ENCODE measurements at regions of chr5 and their contacts with region 1.

Region 1: GRCh38 chr5:164504141-164504772 is 998.8 kb downstream of the MAT2B start:
- DNase-seq: peak; percentile 75
- ATAC-seq: peak; percentile 51
- H3K4me3 ChIP-seq: no peak overlapping the region
- H3K4me3 Mint-ChIP-seq: no peak overlapping the region
- H3K27ac ChIP-seq: no peak overlapping the region
- H3K27ac Mint-ChIP-seq: no peak overlapping the region
- H3K4me1 ChIP-seq: no peaks in the 10 kb centered on the region
- H3K4me1 Mint-ChIP-seq: peaks cover 7% of the 10 kb centered on the region
- H3K27me3 ChIP-seq: no peaks in the 10 kb centered on the region
- H3K27me3 Mint-ChIP-seq: peaks cover 8% of the 10 kb centered on the region
- CTCF ChIP-seq: peak; percentile 85

Region 2: GRCh38 chr5:163473635-163474243 is 1030.5 kb before region 1 on chr5:
- CTCF ChIA-PET with region 1: interaction called, 3 read pairs
- POLR2A ChIA-PET with region 1: no interaction called
- intact Hi-C with region 1: loop called (anchors 10 kb)
- DNase-seq: peak; percentile 47
- ATAC-seq: peak; percentile 78
- H3K4me3 ChIP-seq: no peak overlapping the region
- H3K4me3 Mint-ChIP-seq: no peak overlapping the region
- H3K27ac ChIP-seq: no peak overlapping the region
- H3K27ac Mint-ChIP-seq: no peak overlapping the region
- H3K4me1 ChIP-seq: no peaks in the 10 kb centered on the region
- H3K4me1 Mint-ChIP-seq: no peaks in the 10 kb centered on the region
- H3K27me3 ChIP-seq: no peaks in the 10 kb centered on the region
- H3K27me3 Mint-ChIP-seq: no peaks in the 10 kb centered on the region
- CTCF ChIP-seq: peak; percentile 69

Region 3: GRCh38 chr5:163564321-163564938 is 939.8 kb before region 1 on chr5:
- CTCF ChIA-PET with region 1: interaction called, 147 read pairs
- POLR2A ChIA-PET with region 1: no interaction called
- intact Hi-C with region 1: loop called (anchors 1 kb)
- DNase-seq: peak; percentile 72
- ATAC-seq: peak; percentile 71
- H3K4me3 ChIP-seq: no peak overlapping the region
- H3K4me3 Mint-ChIP-seq: no peak overlapping the region
- H3K27ac ChIP-seq: no peak overlapping the region
- H3K27ac Mint-ChIP-seq: no peak overlapping the region
- H3K4me1 ChIP-seq: peaks cover 17 to 21% of the 10 kb centered on the region in 2 donors
- H3K4me1 Mint-ChIP-seq: peaks cover 21% of the 10 kb centered on the region
- H3K27me3 ChIP-seq: peaks cover 0 to 33% (median 26%) of the 10 kb centered on the region in 4 experiments
- H3K27me3 Mint-ChIP-seq: peaks cover 61% of the 10 kb centered on the region
- CTCF ChIP-seq: peak; percentile 97

Region 4: DNA sequence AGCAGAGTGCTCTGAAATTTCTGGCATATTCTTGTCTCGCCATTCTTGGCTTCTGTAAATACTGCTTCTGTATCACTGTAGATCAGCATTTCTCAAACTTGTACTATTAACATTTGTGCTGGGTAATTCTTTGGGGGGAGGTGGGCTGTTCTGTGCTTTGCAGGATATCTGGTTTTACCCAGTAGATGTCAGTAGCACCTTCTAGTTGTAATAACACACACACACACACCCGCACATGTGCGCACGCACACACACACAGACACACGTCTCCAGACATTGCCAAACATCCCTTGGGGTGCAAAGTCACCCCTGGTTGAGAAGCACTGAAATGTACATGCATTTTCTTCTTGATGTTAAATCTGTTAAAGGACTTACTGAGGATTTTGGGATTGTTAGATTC is 694.8 kb before region 1 on chr5:
- CTCF ChIA-PET with region 1: interaction called, 7 read pairs
- POLR2A ChIA-PET with region 1: no interaction called
- intact Hi-C with region 1: loop called (anchors 5 kb)
- DNase-seq: peak; percentile 27
- ATAC-seq: peak; percentile 33
- H3K4me3 ChIP-seq: no peak overlapping the region
- H3K4me3 Mint-ChIP-seq: no peak overlapping the region
- H3K27ac ChIP-seq: no peak overlapping the region
- H3K27ac Mint-ChIP-seq: no peak overlapping the region
- H3K4me1 ChIP-seq: peaks cover 0 to 5% of the 10 kb centered on the region in 2 donors
- H3K4me1 Mint-ChIP-seq: peaks cover 21% of the 10 kb centered on the region
- H3K27me3 ChIP-seq: no peaks in the 10 kb centered on the region
- H3K27me3 Mint-ChIP-seq: peaks cover 5% of the 10 kb centered on the region
- CTCF ChIP-seq: no peak

Region 5: GRCh38 chr5:164013077-164013670 is 491.1 kb before region 1 on chr5:
- CTCF ChIA-PET with region 1: interaction called, 42 read pairs
- POLR2A ChIA-PET with region 1: no interaction called
- intact Hi-C with region 1: loop called (anchors 1 kb)
- DNase-seq: peak; percentile 79
- ATAC-seq: peak; percentile 65
- H3K4me3 ChIP-seq: no peak overlapping the region
- H3K4me3 Mint-ChIP-seq: peak overlapping the region; percentile 48
- H3K27ac ChIP-seq: no peak overlapping the region
- H3K27ac Mint-ChIP-seq: peak overlapping the region; percentile 43
- H3K4me1 ChIP-seq: peaks cover 4 to 8% of the 10 kb centered on the region in 2 donors
- H3K4me1 Mint-ChIP-seq: peaks cover 11% of the 10 kb centered on the region
- H3K27me3 ChIP-seq: no peaks in the 10 kb centered on the region
- H3K27me3 Mint-ChIP-seq: no peaks in the 10 kb centered on the region
- CTCF ChIP-seq: peak; percentile 88

Region 6: GRCh38 chr5:164518052-164518740 is 13.9 kb after region 1 on chr5:
- CTCF ChIA-PET with region 1: interaction called, 13 read pairs
- POLR2A ChIA-PET with region 1: no interaction called
- intact Hi-C with region 1: no loop called
- DNase-seq: no peak
- ATAC-seq: no peak
- H3K4me3 ChIP-seq: no peak overlapping the region
- H3K4me3 Mint-ChIP-seq: no peak overlapping the region
- H3K27ac ChIP-seq: no peak overlapping the region
- H3K27ac Mint-ChIP-seq: no peak overlapping the region
- H3K4me1 ChIP-seq: no peaks in the 10 kb centered on the region
- H3K4me1 Mint-ChIP-seq: no peaks in the 10 kb centered on the region
- H3K27me3 ChIP-seq: no peaks in the 10 kb centered on the region
- H3K27me3 Mint-ChIP-seq: no peaks in the 10 kb centered on the region
- CTCF ChIP-seq: no peak

Measured in B cell (primary cell).